ENCODE measurements at regions of chr17 and their contacts with region 1.

Region 1: GRCh38 chr17:34443619-34444469 is 80.8 kb upstream of the CCL1 start:
- DNase-seq: no peak
- H3K4me3 ChIP-seq: no peak overlapping the region
- CTCF ChIP-seq: no peak

Region 2: DNA sequence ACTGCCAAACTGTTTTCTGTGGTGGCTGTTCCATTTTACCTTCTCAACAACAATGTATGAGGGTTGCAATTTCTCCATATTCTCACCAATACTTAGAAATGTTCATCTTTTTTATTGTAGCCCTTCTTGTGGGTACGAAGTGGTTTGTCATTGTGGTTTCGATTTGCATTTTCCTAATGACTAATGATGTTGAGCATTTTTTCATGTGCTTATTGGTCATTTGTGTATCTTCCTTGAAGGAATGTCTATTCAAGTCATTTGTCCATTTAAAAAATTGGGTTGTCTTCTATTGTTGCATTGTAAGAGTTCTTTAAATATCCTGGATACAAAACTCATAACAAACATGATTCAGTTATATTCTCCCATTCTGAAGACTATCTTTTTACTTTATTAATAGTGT is 236.3 kb before region 1 on chr17:
- in situ Hi-C with region 1: no loop called
- DNase-seq: no peak
- H3K4me3 ChIP-seq: no peak overlapping the region
- CTCF ChIP-seq: no peak

Region 3: DNA sequence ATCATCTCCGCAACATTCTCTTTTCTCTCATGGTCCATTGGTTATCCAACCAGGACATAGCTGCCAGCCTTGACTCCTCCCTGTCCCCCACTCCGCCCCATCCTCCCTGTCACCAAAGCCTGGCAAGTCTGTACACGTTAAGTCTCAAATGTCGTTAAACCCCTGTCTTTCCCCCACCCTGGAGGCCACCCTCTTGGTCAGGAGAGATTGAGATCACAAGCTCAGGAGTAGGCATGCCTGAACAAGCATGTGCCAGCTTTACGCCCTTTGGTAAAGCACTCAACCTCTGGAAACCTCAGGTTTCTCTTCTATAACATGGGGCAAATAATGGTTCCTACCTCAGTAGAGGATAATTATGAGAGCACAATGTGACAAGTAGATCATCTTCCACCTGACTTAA is 42.7 kb before region 1 on chr17:
- in situ Hi-C with region 1: no loop called
- DNase-seq: no peak
- H3K4me3 ChIP-seq: no peak overlapping the region
- CTCF ChIP-seq: no peak

Region 4: DNA sequence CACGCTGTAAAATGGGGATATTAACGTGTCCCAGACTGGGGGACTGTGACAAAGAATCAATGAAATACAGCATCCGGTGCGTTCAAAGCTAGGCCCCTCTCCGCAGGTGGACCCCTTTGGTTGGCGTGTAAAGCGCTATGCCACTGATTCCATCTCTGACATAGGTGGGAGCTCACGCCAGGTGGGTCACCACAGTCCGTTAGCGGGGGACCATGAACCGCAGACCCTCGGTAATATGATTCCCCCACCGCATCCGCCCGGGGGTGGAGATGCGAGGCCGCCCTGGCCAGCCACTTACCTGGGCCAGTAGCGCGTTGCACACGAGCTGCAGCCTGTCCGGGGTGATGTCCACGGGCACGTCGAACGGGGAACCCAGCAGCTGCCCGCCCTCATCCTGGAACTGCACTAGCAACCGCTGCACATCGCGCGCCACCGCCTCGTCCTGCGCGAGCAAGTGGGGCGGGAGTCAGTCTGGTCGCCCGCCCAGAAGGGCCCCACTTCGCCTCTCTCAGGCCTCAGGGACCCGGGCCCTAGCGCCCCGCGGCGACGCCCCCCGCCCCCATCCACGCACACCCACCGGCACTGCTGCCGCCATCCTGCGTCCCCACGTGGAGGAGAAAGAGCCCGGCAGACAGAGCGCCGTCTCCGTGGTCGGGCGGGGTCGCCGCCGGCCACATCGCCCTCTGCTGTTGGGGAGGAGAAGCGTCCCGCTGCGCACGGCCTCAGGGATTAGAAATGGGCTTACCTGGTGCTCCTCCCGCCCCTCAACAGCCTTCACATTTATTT is 698.0 kb after region 1 on chr17 and contains the start of gene NLE1:
- in situ Hi-C with region 1: loop called (anchors 25 kb)
- DNase-seq: peak; percentile 48
- H3K4me3 ChIP-seq: peak within 1 kb of the TSS; percentile 95
- CTCF ChIP-seq: peak; percentile 93

Measured in astrocyte of the cerebellum (primary cell).